Tibial artery (tissue), 4 donors: ENCODE measurements at regions of chr4 and their contacts with region 1.

Region 1: DNA sequence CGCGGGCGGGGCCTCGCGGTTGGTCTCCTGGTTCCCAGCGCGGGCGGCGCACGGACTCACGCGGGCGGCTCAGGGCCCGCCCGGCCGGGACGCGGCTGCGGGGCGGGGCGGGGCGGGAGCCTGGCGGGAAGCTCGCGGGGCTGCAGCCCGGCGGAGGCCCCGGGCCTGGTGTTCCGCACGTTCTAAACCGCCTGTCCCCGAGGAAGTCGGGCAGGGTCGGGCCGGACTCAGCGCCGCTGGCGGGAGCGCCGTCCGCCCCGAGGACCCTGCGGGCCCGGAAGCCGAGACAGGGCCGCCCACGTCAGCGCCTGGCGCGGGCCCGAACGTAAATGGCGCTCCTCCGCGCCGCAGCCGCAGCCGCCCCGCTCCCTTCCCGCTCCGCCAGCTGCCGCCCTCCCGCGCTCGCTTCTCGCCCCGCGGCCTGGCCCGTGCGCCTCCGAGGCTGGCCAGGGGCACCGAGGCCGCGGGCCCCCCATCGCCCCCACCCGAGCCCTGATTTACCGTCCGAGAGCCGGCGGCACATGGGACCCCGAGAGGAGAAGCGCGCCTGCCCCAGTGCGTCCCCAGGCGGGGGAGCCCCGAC is 309 bp upstream of the CTBP1 start:
- DNase-seq: peak; percentile 80 to 92
- H3K4me3 ChIP-seq: peak overlapping the region; percentile 61 to 67
- H3K27ac ChIP-seq: peak overlapping the region; percentile 93 to 96
- H3K4me1 ChIP-seq: peaks cover 15 to 48% (median 42%) of the 10 kb centered on the region in 4 donors
- H3K27me3 ChIP-seq: no peaks in the 10 kb centered on the region
- CTCF ChIP-seq: no peak

Region 2: DNA sequence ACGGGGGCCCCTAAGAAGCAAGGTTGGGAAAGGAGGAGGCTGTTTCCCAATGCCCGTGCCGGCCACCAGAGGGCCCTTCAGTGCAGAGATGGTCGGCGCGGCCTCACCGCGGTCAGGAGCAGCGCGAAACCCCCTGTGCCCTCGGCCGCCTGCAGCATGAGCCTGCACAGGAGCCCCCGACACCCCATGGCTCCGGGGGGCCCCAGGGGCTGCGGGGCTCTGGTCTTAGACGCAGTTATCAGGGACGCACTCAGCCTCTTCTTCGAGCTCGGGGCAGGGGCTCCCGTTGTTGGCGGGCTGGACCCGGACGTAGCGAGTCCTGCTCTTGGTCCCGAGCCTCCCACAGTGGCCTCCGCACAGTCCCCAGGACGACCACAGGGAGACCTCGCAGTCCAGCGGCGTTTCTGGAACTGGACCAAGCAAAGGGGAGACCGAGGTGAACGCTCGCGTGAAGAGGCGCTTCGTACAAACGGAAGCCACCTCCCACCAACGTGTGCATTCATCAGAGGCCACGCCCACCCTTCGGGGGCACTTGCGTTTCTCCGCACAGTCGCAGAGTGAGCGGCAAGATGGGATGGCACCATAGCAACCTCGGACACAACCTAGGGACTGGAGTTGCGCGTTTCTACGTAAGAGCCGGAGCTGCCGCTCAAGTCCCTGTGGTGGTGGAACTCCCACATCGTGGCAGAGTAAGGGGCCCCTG is 81.8 kb before region 1 on chr4:
- intact Hi-C with region 1: loop called (anchors 1 kb)
- DNase-seq: peak; percentile 77 to 87
- H3K4me3 ChIP-seq: peak overlapping the region; percentile 55 to 58
- H3K27ac ChIP-seq: peak overlapping the region in 1 of 2 donors; percentile 35
- H3K4me1 ChIP-seq: peaks cover 0 to 36% (median 25%) of the 10 kb centered on the region in 4 donors
- H3K27me3 ChIP-seq: peaks cover 0 to 33% of the 10 kb centered on the region in 2 donors
- CTCF ChIP-seq: peak; percentile 89 to 92

Region 3: DNA sequence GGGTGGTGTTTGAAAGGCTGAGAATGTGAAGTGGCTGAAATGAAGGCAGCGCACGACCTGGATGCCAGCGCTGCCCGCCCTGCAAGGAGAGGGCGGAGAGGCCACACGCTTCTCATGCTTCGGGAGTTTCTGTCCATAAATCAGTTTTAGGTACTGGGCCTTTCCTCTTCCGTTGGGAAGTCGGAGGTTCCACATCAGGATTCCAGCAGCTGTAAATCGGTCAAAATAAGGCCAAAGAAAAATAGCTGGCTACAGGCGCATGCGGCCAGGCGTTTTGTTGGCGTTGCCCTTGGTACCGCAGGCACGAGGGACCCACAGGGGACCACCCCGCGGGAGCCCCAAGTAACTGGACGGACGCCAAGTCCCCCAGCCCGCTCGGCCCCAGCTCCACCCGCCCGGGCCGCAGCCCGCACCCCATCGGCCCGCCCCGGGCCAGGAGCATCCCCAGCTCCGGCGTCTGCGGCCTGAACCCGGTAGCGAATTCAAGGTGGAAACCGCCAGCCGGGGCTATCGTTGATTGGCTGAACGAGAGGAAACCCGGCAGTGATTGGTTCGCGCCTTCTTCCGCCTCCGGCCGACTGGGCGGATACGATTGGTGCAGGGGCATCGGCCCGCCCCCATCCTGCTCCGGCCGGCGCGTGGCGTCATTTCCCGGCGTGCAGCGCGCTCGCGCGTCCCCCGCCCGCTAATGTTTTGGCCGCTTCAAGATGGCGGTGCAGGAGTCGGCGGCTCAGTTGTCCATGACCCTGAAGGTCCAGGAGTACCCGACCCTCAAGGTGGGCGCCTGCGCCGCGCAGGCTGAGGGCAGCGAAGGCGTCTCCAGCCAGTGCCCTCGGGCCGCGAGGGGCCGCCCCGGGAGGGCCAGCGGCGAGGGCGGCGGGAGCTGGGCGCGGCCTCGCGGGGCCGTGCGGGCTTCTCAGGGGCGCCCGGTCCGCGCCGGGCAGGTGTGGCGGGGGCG is 40.2 kb after region 1 on chr4 and contains the start of gene MAEA:
- intact Hi-C with region 1: loop called (anchors 5 kb)
- DNase-seq: peak; percentile 96 to 98
- H3K4me3 ChIP-seq: peak within 1 kb of the TSS; percentile 78 to 85
- H3K27ac ChIP-seq: peak within 1 kb of the TSS; percentile 77 to 80
- H3K4me1 ChIP-seq: peaks cover 4 to 51% (median 35%) of the 10 kb centered on the region in 4 donors
- H3K27me3 ChIP-seq: no peaks in the 10 kb centered on the region
- CTCF ChIP-seq: no peak

Region 4: DNA sequence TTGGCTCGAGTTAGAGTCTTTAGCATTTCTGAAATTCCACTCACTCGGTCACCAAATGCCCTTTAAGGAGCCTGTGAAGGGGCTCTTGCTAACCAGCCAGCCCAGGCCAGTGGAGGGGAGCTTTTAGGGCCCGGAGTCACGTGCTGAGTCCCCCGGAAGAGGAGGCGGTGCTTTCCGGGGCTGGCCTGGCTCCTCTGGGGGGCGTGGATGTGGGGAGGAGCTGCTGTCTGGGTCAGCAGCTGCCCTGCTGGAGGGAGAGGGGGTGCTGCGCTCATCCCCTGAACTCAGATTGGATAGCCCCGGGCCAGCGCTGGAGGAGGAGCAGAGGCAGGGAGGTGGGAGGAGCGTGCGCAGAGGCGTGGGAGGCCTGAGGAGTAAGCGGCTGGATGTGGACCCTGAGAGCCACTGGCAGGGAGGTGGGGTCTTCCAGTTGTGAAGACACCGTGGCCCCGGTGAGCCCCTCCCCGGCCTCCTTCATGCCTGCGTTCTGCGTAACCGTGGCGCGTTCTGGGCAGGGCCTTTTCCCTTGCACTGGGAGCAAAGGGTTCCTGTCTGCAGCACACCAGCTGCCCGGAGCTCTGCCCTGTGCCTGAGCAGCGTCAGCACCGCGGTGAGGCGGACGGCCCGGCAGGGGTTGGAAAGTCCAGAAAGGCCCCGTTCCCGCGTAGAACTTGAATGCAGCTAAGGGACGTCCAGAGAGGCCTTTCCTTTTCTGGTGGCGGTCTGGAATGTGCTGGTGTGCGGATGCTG is 60.2 kb after region 1 on chr4:
- intact Hi-C with region 1: no loop called
- DNase-seq: peak; percentile 93 to 96
- H3K4me3 ChIP-seq: peak overlapping the region; percentile 47 to 55
- H3K27ac ChIP-seq: peak overlapping the region; percentile 73 to 81
- H3K4me1 ChIP-seq: peaks cover 0 to 34% (median 26%) of the 10 kb centered on the region in 4 donors
- H3K27me3 ChIP-seq: no peaks in the 10 kb centered on the region
- CTCF ChIP-seq: no peak

Region 5: GRCh38 chr4:1427010-1427409 is 177.8 kb after region 1 on chr4:
- intact Hi-C with region 1: no loop called
- DNase-seq: no peak
- H3K4me3 ChIP-seq: no peak overlapping the region
- H3K27ac ChIP-seq: no peak overlapping the region
- H3K4me1 ChIP-seq: no peaks in the 10 kb centered on the region
- H3K27me3 ChIP-seq: peaks cover 0 to 34% of the 10 kb centered on the region in 2 donors
- CTCF ChIP-seq: no peak